Endothelial cell of umbilical vein (primary cell): ENCODE measurements at regions of chr12 and their contacts with region 1.

Region 1: DNA sequence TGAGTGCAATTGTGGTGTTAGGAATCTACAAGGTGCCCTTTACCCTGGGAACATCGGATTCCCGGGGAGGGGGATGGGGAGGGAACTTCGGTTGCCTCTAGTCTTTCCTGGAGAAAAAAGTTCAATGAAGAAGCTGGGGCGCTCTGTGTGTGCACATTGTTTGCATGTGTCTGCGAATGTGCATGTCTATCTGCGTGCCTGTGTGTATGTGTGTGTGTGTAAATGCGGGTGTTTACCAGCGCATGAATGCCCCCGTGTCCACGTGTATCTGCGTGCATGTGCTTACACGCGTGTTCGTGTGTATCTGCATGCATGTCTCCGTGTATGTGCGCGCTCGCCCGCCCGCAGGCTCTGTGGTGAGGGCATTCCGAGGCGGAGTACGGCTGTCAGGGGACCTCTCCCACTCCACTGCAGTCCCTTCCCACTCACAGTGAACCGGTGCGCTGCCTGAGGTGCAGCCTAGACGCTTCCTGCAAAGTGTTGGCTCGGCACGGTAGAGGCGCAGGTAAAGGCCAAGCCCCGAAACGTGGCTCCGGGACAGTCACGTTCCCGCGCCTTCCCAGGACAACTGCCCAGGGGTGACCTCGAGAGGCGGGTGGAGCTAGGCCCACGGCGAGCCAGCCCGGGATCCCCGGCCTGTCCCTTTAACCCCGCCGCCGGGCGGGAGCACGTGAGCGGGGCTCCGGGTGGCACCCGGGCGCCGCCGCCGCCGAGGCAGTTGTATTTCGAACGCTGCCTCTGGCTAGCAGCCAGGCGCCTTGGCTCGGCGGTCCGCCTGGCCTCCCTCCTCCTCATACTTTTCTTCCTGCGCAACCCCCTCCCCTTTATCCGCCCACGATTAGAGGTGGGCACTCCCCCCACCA is 539 bp upstream of the HMGA2 start:
- DNase-seq: peak; percentile 60
- H3K4me3 ChIP-seq: peak overlapping the region; percentile 58 to 97 (median 71)
- H3K27ac ChIP-seq: peak overlapping the region; percentile 71
- H3K4me1 ChIP-seq: peaks cover 31% of the 10 kb centered on the region
- H3K27me3 ChIP-seq: no peaks in the 10 kb centered on the region
- CTCF ChIP-seq: no peak
- POLR2A ChIP-seq: no peak

Region 2: DNA sequence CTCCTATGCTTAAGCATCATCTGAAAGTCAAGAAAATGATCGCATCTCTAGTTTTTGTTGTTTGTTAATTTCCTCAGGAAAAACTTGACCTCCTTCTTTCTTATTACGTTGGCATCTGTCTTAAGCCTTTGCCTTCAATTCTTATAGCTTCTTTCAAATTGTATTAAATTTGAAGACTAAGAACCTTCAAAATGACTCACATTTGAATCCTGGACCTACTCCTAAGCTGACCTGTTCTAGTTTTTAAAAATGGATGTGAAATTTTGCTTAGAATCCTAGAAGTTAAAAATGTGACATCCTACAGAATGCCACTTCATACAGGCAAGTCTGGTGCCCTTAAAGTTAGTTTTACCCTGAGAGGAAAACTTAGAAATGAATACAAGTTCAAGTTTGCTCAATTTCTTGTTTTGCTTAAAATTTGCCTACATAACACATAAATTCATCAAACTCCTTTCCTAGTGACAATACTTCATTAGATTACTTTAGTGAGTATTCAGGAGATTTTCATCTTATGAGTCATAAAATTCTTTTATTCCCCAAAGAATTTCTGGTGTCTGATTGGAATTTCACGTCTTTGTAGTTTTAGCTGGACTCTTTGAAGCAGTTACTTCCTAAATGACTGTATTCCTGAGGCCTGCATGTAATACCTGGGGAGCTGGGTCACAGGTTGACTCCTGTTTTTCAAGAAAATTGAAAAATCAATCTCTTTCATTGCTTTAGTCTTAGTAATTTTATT is 393.0 kb before region 1 on chr12:
- CTCF ChIA-PET with region 1: no interaction called
- POLR2A ChIA-PET with region 1: no interaction called
- dilution Hi-C with region 1: no loop called
- intact Hi-C with region 1: loop called (anchors 5 kb)
- DNase-seq: peak; percentile 80
- H3K4me3 ChIP-seq: peak overlapping the region in 1 of 3 experiments; percentile 28
- H3K27ac ChIP-seq: peak overlapping the region; percentile 94
- H3K4me1 ChIP-seq: peaks cover 51% of the 10 kb centered on the region
- H3K27me3 ChIP-seq: no peaks in the 10 kb centered on the region
- CTCF ChIP-seq: no peak
- POLR2A ChIP-seq: peak; percentile 60

Region 3: DNA sequence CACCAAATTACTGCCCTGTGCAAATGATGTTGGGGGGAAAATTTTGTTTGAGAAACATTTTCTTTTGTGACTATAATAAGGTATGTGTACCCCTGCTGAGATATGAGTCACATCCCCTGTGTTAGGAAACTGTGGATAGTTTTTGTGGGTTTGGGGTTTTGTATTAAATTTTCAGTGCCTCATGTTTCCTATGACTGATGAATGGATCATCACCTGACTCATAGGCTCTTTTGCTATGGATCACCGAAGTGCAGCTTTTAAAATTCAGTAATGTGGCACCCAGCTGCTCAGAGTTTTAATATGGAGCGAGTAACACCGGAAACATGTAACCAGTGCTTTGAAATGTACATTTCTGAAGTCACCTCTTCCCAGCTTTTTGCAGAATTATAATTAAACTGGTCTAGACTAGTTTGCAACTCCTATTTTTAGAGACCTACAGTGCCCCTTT is 166.8 kb before region 1 on chr12:
- CTCF ChIA-PET with region 1: no interaction called
- POLR2A ChIA-PET with region 1: no interaction called
- dilution Hi-C with region 1: no loop called
- intact Hi-C with region 1: loop called (anchors 1 kb)
- DNase-seq: peak; percentile 89
- H3K4me3 ChIP-seq: no peak overlapping the region
- H3K27ac ChIP-seq: peak overlapping the region; percentile 100
- H3K4me1 ChIP-seq: peaks cover 66% of the 10 kb centered on the region
- H3K27me3 ChIP-seq: no peaks in the 10 kb centered on the region
- CTCF ChIP-seq: no peak
- POLR2A ChIP-seq: peak; percentile 70

Region 4: GRCh38 chr12:65779091-65779642 is 44.6 kb before region 1 on chr12:
- CTCF ChIA-PET with region 1: no interaction called
- POLR2A ChIA-PET with region 1: no interaction called
- dilution Hi-C with region 1: no loop called
- intact Hi-C with region 1: loop called (anchors 1 kb)
- DNase-seq: peak; percentile 51
- H3K4me3 ChIP-seq: no peak overlapping the region
- H3K27ac ChIP-seq: peak overlapping the region; percentile 46
- H3K4me1 ChIP-seq: peaks cover 17% of the 10 kb centered on the region
- H3K27me3 ChIP-seq: no peaks in the 10 kb centered on the region
- CTCF ChIP-seq: no peak
- POLR2A ChIP-seq: no peak

Region 5: GRCh38 chr12:65935906-65936901 is 112.5 kb after region 1 on chr12:
- CTCF ChIA-PET with region 1: interaction called, 4 read pairs
- POLR2A ChIA-PET with region 1: no interaction called
- dilution Hi-C with region 1: no loop called
- intact Hi-C with region 1: loop called (anchors 1 kb)
- DNase-seq: peak; percentile 97
- H3K4me3 ChIP-seq: peak overlapping the region in 1 of 3 experiments; percentile 22
- H3K27ac ChIP-seq: peak overlapping the region; percentile 96
- H3K4me1 ChIP-seq: peaks cover 80% of the 10 kb centered on the region
- H3K27me3 ChIP-seq: no peaks in the 10 kb centered on the region
- CTCF ChIP-seq: no peak
- POLR2A ChIP-seq: peak; percentile 52

Region 6: DNA sequence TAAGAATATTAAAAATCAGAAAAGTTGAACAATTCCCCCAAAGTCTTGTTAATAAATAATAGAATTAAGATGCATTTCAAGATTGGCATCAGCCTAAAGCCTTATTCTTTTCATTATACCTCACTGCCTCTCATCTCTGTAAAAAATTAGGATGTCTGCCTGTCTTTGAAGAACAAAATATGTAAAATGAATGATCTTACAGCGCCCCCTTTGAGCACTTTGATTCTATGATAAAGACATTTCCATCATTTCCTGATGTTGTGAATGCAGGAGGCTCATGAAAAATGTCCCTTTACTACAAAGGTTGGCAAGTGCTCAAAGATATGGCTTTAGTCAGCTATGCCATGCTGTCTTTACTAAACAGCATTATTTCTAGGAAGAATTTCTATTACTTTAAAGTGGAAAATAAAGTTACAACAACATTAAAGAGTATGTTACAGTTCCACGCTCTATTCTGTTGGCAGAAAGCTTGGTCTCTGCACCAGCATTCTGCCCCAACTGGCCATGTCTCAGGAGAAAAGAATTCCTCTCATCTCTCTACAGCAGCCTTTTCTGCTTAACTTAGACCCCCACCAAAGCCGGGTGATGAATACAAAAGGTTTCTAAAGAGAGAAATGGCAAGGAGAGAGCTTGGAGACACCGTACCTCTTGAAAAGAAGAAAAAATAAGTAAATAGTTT is 211.7 kb after region 1 on chr12:
- CTCF ChIA-PET with region 1: interaction called, 3 read pairs
- POLR2A ChIA-PET with region 1: no interaction called
- dilution Hi-C with region 1: no loop called
- intact Hi-C with region 1: loop called (anchors 2 kb)
- DNase-seq: peak; percentile 71
- H3K4me3 ChIP-seq: no peak overlapping the region
- H3K27ac ChIP-seq: no peak overlapping the region
- H3K4me1 ChIP-seq: peaks cover 10% of the 10 kb centered on the region
- H3K27me3 ChIP-seq: peaks cover 1 to 3% of the 10 kb centered on the region in 2 experiments
- CTCF ChIP-seq: peak; percentile 26 to 35
- POLR2A ChIP-seq: no peak